Mammary epithelial cell (primary cell): ENCODE measurements at regions of chr5 and their contacts with region 1.

Region 1: GRCh38 chr5:34957857-34958690 is 28.7 kb downstream of the DNAJC21 start:
- DNase-seq: no peak
- H3K4me3 ChIP-seq: no peak overlapping the region
- H3K27ac ChIP-seq: no peak overlapping the region
- H3K4me1 ChIP-seq: peaks cover 9% of the 10 kb centered on the region
- H3K27me3 ChIP-seq: no peaks in the 10 kb centered on the region
- CTCF ChIP-seq: peak; percentile 51 to 69

Region 2: GRCh38 chr5:35003018-35003957 is 45.2 kb after region 1 on chr5:
- CTCF ChIA-PET with region 1: no interaction called
- dilution Hi-C with region 1: no loop called
- in situ Hi-C with region 1: no loop called
- intact Hi-C with region 1: loop called (anchors 1 kb)
- DNase-seq: peak; percentile 42
- H3K4me3 ChIP-seq: no peak overlapping the region
- H3K27ac ChIP-seq: no peak overlapping the region
- H3K4me1 ChIP-seq: no peaks in the 10 kb centered on the region
- H3K27me3 ChIP-seq: no peaks in the 10 kb centered on the region
- CTCF ChIP-seq: peak; percentile 92 to 94